Ovary (tissue), 10 donors: ENCODE measurements at regions of chr22 and their contacts with region 1.

Region 1: GRCh38 chr22:43236411-43237166 is 49.7 kb upstream of the TTLL12 start:
- DNase-seq: peak; percentile 86 to 94 (median 89)
- H3K4me3 ChIP-seq: no peak overlapping the region
- H3K27ac ChIP-seq: peak overlapping the region; percentile 32 to 84
- H3K4me1 ChIP-seq: peaks cover 58% of the 10 kb centered on the region
- H3K27me3 ChIP-seq: no peaks in the 10 kb centered on the region
- CTCF ChIP-seq: no peak
- EP300 ChIP-seq: no peak
- POLR2A ChIP-seq: no peak

Region 2: GRCh38 chr22:43260331-43261231 is 24.0 kb after region 1 on chr22:
- intact Hi-C with region 1: loop called in 1 of 4 experiments (anchors 1 kb)
- DNase-seq: peak; percentile 76 to 89 (median 81)
- H3K4me3 ChIP-seq: no peak overlapping the region
- H3K27ac ChIP-seq: peak overlapping the region; percentile 39 to 75
- H3K4me1 ChIP-seq: peaks cover 31% of the 10 kb centered on the region
- H3K27me3 ChIP-seq: no peaks in the 10 kb centered on the region
- CTCF ChIP-seq: no peak
- EP300 ChIP-seq: no peak
- POLR2A ChIP-seq: no peak

Region 3: DNA sequence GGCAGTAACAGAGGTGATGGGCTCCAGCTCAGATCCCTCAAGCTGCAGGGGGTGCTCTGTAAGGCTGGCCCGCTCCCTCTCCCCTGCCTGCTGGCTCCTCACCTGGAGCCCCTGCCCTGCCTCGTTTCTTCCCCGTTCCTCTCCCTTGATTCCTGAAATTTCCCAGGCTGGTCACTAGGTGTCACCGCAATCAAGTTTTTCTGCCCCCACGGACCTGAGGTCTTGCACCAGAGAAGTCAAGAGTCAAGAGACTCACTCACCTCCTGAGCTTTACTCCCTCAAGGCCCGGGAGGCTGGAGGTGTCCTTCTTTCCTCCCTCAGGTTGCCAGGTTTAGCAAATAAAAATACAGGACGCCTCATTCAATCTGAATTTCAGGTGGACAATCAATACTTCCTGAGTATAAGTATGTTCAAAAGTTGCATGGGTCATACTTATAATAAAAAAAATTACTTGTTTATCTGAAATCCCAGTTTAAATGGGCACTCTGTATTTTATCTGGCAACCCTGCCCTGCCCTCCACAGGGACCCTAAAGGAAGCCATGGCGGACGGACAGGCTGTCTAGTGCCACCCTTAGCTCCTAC is 37.4 kb after region 1 on chr22:
- intact Hi-C with region 1: loop called in 2 of 4 experiments (anchors 5 kb)
- DNase-seq: peak in 2 of 5 donors; percentile 55 to 62
- H3K4me3 ChIP-seq: no peak overlapping the region
- H3K27ac ChIP-seq: peak overlapping the region in 1 of 2 donors; percentile 74
- H3K4me1 ChIP-seq: peaks cover 19% of the 10 kb centered on the region
- H3K27me3 ChIP-seq: no peaks in the 10 kb centered on the region
- CTCF ChIP-seq: peak; percentile 23 to 71 (median 68)
- EP300 ChIP-seq: no peak
- POLR2A ChIP-seq: no peak